GM13977 (cell line): ENCODE measurements at regions of chr4 and their contacts with region 1.

Region 1: GRCh38 chr4:24514803-24515202 is 69.6 kb downstream of the DHX15 start:
- DNase-seq: no peak
- CTCF ChIP-seq: peak; percentile 22

Region 2: GRCh38 chr4:24607334-24607733 is 92.5 kb after region 1 on chr4:
- in situ Hi-C with region 1: loop called (anchors 25 kb)
- DNase-seq: no peak
- CTCF ChIP-seq: no peak